ENCODE measurements at regions of chr3 and their contacts with region 1.

Region 1: GRCh38 chr3:170689893-170690660 is 104.2 kb upstream of the SLC7A14 start:
- DNase-seq: peak; percentile 39
- H3K4me3 Mint-ChIP-seq: no peak overlapping the region
- H3K27ac Mint-ChIP-seq: peak overlapping the region; percentile 89
- H3K4me1 Mint-ChIP-seq: peaks cover 33% of the 10 kb centered on the region
- H3K27me3 Mint-ChIP-seq: no peaks in the 10 kb centered on the region
- CTCF ChIP-seq: peak; percentile 41

Region 2: GRCh38 chr3:170726976-170727661 is 37.0 kb after region 1 on chr3:
- CTCF ChIA-PET with region 1: no interaction called
- POLR2A ChIA-PET with region 1: interaction called, 3 read pairs
- intact Hi-C with region 1: loop called (anchors 5 kb)
- DNase-seq: peak; percentile 75
- H3K4me3 Mint-ChIP-seq: no peak overlapping the region
- H3K27ac Mint-ChIP-seq: no peak overlapping the region
- H3K4me1 Mint-ChIP-seq: peaks cover 11% of the 10 kb centered on the region
- H3K27me3 Mint-ChIP-seq: no peaks in the 10 kb centered on the region
- CTCF ChIP-seq: no peak

Region 3: DNA sequence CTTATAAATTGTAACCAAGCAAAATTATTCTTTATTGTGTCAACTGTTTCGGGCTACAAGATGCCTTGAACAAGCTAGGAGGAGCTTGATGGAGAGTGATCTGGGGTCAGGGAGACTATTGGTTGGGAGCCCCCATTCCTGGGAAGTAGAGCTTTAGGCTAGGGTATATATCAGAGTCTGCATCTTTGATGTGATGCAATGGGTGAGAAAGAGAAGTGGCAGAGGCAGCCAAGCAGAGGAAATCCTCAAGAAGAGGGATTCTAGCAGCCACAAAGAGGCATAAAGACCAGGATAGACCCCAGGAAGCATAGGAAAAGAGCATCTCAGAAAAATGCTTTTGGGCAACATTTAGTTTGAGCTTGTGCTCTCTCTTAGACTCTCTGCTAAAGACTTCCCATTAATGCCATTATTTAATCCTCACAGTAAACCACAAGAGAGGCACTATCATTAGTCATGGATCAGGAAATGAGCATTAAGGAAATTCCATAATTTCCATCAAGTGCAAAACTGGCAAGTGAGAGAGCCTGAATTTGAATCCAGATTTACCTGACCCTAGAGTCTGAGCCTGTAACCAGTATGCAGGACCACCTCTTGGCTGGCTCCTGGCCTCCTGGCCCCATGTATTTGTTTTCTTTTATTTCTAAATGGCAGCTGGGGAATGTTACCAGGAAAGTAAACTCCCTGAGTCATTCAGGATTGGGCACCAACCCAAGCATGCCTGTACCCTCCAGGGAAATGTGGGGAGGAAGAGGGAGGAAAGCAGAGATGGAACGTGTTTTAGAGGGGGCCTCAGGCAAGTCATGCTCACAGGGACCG is 61.2 kb after region 1 on chr3:
- CTCF ChIA-PET with region 1: interaction called, 4 read pairs
- POLR2A ChIA-PET with region 1: interaction called, 11 read pairs
- intact Hi-C with region 1: no loop called
- DNase-seq: peak; percentile 93
- H3K4me3 Mint-ChIP-seq: peak overlapping the region; percentile 16
- H3K27ac Mint-ChIP-seq: peak overlapping the region; percentile 59
- H3K4me1 Mint-ChIP-seq: peaks cover 66% of the 10 kb centered on the region
- H3K27me3 Mint-ChIP-seq: no peaks in the 10 kb centered on the region
- CTCF ChIP-seq: no peak

Measured in MCF 10A (cell line).